ENCODE measurements at regions of chr6 and their contacts with region 1.

Region 1: DNA sequence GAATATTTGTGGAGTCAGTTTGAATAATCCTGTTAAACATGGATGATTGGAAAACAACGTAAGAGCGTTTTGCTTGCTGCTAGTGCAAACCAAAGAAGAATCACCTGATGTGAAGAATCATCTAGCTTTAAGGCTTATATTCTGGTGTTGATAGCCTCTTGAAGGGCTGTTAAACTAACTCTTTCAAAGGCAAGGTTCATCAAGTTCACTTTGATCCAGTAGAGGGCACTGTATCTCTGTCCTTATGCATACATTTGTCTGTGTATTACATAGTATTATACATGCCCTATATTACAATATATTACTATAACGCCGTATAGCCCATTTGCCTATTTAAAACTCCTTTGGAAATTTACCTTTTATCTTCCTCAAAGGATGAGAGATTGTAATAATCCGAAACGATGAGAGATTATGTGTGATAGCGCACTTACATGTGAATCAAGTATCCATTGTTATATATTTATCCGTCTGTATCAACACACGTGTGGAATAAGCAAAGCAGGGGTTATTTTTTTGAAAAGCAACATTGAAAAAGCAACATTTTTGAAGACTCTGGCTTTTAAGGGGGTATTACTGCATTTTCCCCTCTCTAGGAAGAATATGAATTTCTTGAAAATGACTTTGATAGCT is 50.8 kb upstream of the NRN1 start:
- DNase-seq: peak; percentile 43
- H3K4me3 ChIP-seq: no peak overlapping the region; a peak in 1 of 4 replicates
- H3K27ac ChIP-seq: no peak overlapping the region
- H3K4me1 ChIP-seq: no peaks in the 10 kb centered on the region
- H3K27me3 ChIP-seq: peaks cover 31% of the 10 kb centered on the region; the same call in 1 of the 2 replicates
- CTCF ChIP-seq: peak; percentile 73
- EP300 ChIP-seq: no peak
- RAD21 ChIP-seq: peak; percentile 64

Region 2: DNA sequence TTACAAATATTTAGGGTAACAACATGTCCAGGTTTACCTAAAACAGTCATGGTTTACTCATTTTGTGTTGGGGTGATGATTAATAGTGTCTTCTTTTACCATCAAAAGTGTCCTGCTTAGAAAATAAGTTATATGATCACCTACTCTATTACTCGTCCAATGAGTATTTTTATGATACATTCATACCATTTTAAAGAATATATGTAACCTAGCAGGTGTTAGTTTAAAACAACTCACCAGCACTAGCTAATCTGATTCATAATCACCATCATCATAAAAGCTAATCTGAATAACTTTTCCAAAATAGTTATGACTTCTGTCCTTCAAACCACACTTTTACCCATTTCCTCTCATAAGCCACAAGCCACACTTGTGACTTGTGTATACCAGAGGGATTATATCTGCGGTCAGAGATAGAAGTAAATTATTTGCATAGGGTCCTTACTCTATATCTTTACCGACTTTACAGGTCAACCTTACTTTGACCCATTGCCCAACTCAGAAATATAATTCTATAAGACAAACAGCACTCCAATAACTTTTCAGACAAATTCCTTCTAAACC is 17.5 kb before region 1 on chr6:
- CTCF ChIA-PET with region 1: interaction called, 17 read pairs
- POLR2A ChIA-PET with region 1: no interaction called
- DNase-seq: no peak
- H3K4me3 ChIP-seq: no peak overlapping the region
- H3K27ac ChIP-seq: no peak overlapping the region
- H3K4me1 ChIP-seq: no peaks in the 10 kb centered on the region
- H3K27me3 ChIP-seq: no peaks in the 10 kb centered on the region
- CTCF ChIP-seq: no peak
- EP300 ChIP-seq: no peak
- RAD21 ChIP-seq: no peak

Region 3: GRCh38 chr6:6085928-6086668 is 28.6 kb after region 1 on chr6:
- CTCF ChIA-PET with region 1: interaction called, 11 read pairs
- POLR2A ChIA-PET with region 1: no interaction called
- DNase-seq: no peak
- H3K4me3 ChIP-seq: no peak overlapping the region
- H3K27ac ChIP-seq: no peak overlapping the region
- H3K4me1 ChIP-seq: no peaks in the 10 kb centered on the region
- H3K27me3 ChIP-seq: no peaks in the 10 kb centered on the region
- CTCF ChIP-seq: no peak
- EP300 ChIP-seq: no peak
- RAD21 ChIP-seq: no peak

Region 4: DNA sequence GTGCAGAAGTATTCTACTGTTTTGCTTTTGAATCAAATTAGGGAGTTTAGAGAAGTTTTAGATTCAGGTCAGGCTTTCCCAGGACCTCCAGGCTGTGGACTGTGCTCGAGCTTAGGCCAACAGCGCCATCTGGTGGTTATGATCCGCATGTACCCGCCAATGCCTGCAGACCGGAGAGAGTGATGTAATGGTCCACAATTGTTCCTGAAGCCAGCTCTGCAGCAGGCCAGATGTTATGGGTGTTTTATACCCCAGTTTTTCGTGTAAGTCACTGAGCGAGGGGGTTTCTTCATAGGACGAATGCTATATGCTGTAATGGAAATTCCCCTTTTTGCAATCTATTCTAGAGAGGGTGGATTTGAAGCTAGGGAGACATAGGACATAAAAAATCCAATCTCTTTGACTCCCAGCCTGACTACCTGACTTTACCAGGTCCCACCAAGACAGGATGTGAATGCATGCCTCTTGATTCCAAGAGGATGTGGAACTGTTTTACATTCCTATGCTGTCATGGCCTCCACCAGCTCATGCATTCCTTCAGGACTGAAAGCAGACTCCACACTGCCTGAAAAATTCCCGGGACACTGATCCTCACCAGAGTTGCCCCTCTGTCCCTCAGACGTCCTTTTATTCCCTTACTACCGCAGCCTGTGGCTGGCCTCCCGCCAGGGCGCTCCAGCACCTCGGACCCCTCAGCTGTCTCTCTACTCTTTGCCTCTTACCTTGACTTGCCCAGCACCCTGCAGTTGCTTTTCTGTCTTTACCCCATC is 489.8 kb after region 1 on chr6:
- CTCF ChIA-PET with region 1: interaction called, 19 read pairs
- POLR2A ChIA-PET with region 1: no interaction called
- DNase-seq: peak; percentile 83
- H3K4me3 ChIP-seq: peak overlapping the region; percentile 27 to 50; a peak in 2 of 4 replicates
- H3K27ac ChIP-seq: no peak overlapping the region
- H3K4me1 ChIP-seq: peaks cover 0 to 2% of the 10 kb centered on the region in 2 experiments; a peak in 1 of 4 replicates
- H3K27me3 ChIP-seq: no peaks in the 10 kb centered on the region; the same call in 1 of the 2 replicates
- CTCF ChIP-seq: peak; percentile 82
- EP300 ChIP-seq: no peak
- RAD21 ChIP-seq: peak; percentile 85

Region 5: DNA sequence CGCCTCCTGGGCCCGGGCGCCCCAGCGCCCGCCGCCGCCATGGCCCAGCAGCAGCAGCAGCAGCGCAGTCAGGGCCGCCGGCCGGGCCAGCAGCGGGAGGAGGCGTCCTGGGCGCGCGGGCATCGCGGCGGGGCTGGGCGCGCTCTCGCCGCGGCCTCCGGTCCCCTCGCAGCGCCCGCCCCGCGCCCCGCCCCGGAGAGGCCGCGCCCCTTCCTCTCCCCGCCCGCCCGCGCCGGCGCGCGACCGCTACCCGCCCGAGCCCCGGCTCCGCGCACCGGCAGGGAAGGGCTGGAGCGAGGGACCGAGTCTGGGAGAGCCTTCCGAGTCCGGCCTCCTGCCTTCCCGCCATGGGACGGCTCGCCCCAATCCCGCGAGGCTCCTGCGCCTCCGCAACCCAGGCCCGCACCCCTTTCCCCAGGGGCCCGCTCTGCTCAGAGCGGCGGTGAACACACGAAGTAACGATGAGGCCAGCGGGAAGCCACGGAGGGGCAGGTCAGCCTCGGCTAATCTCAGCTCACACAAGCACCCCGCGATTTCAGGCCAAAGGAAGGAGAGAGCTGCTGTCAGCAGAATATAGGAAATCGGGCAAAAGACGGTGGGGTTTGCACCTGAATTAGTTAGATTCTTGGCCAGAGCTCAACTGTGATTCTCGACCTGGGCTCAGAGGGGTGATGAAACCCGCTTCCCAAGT is 1853.3 kb after region 1 on chr6 and contains the start of gene TXNDC5:
- CTCF ChIA-PET with region 1: no interaction called
- POLR2A ChIA-PET with region 1: no interaction called
- DNase-seq: peak; percentile 97
- H3K4me3 ChIP-seq: peak within 1 kb of the TSS; percentile 72 to 85
- H3K27ac ChIP-seq: peak within 1 kb of the TSS; percentile 43 to 65; a peak in 3 of 4 replicates
- H3K4me1 ChIP-seq: peaks cover 11% of the 10 kb centered on the region in 2 experiments; a peak in 2 of 4 replicates
- H3K27me3 ChIP-seq: peaks cover 6% of the 10 kb centered on the region; the same call in 1 of the 2 replicates
- CTCF ChIP-seq: no peak
- EP300 ChIP-seq: no peak
- RAD21 ChIP-seq: no peak
- polyA plus RNA-seq, gene TXNDC5: 187 and 207 TPM in 2 replicates

Measured in SK-N-SH (cell line).